ENCODE measurements at regions of chr15 and their contacts with region 1.

Region 1: GRCh38 chr15:81612630-81613029 is 238.6 kb upstream of the TMC3 start:
- DNase-seq: no peak
- ATAC-seq: no peak
- H3K4me3 ChIP-seq: no peak overlapping the region
- H3K27ac ChIP-seq: no peak overlapping the region
- H3K4me1 ChIP-seq: no peaks in the 10 kb centered on the region
- H3K27me3 ChIP-seq: no peaks in the 10 kb centered on the region
- CTCF ChIP-seq: no peak

Region 2: DNA sequence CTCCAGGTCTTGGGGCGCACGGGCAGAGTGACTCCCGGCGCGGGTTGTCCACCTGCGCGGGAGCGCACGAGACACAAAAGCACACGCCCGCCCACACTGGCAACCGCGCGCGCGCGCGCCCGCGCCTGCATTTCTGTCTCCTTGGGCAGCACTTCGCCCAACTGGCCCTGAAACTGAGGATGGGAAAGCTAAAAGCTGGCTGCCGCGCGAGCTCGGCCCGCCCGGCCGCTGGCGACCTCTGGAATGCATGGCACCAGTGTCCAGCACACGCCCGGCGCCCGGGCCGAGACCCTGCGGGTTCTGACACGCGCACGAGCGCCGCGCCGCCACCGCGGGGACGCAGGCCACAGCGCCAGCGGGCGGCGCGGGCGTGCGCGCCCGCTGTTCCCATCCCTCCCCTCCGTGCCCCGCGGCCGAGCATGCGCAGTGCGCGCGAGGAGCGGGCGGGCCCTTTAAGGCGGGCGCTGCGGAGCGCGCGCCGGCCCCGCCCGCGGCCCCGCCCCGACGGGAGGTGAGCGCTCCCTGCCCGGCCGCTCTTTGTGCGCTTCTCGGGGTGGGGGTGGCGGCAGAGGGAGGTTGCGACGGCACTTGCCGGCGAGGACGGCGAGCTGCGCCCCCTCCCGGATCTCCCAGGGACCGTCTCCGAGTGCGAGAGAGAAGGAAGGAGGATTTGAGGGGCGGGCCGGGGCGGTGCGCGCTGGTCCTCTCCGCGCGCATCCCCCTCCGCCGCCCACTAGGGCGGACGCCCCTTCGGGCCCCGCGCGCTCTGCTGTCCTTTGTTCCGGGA is 434.2 kb after region 1 on chr15:
- CTCF ChIA-PET with region 1: no interaction called
- POLR2A ChIA-PET with region 1: no interaction called
- in situ Hi-C with region 1: no loop called
- intact Hi-C with region 1: loop called (anchors 10 kb)
- DNase-seq: peak; percentile 39
- ATAC-seq: peak; percentile 85
- H3K4me3 ChIP-seq: peak overlapping the region; percentile 90 to 96
- H3K27ac ChIP-seq: peak overlapping the region; percentile 95
- H3K4me1 ChIP-seq: peaks cover 4% of the 10 kb centered on the region; the same call in 1 of the 2 replicates
- H3K27me3 ChIP-seq: peaks cover 9% of the 10 kb centered on the region
- CTCF ChIP-seq: peak; percentile 91

Measured in Panc1 (cell line).